Activated T-helper 1 cell treated with anti-CD3 and anti-CD28 coated beads, Interleukin-12 subunit alpha, Interleukin-12 subunit beta, Interleukin-2, Interleukin-4 antibody, amounts not matched to agents 30 ng/mL and 10 ng/mL and 1 ng/mL, durations not matched to agents 14 hours and 24 hours and 36 hours (primary cell): ENCODE measurements at regions of chr5 and their contacts with region 1.

Region 1: GRCh38 chr5:57173185-57174127 is at the start of gene GPBP1:
- DNase-seq: peak; percentile 97
- H3K4me3 Mint-ChIP-seq: peak within 1 kb of the TSS; percentile 96
- H3K27ac Mint-ChIP-seq: peak within 1 kb of the TSS; percentile 97
- H3K4me1 Mint-ChIP-seq: peaks cover 47% of the 10 kb centered on the region
- H3K27me3 Mint-ChIP-seq: no peaks in the 10 kb centered on the region
- total RNA-seq, gene GPBP1: 94.6 and 106 TPM in 2 replicates

Region 2: DNA sequence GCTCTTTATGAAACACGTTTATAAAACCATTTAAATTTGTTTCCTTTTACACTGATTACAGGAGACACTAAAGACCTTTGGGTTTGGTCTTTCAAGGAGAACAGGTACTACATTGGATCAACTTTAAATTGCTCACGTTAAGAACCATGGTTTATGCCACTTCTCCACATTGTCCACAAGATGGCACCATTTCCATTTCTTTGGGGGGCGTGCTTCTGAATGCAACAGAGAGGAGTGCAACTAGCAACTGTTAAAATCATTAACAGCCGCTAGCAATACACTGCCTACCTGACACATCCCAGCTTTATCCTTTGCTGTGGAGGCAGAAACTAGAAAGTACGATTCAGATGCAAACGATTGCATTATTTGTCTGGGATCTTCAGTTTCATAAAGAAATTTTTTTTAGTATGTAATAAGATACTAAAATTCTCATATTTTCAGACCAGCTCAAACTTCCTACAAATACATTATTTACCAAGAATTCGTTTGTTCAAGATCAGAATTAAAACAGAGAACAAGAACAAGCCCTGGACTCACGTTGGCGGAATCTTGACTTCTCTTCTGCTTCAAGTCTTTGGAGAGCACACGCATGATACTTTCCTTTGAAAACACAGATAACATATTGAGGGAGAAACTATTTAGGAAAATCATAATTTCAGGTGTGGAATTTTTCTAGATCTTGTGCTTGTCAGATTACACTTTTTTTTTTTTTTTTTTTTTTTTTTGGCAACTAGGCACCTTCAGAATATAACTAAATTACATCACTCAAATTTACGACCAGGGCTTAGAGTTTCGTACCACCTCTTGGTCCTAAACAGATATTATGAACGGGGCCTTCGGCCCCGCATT is 2001.2 kb before region 1 on chr5:
- intact Hi-C with region 1: loop called (anchors 2 kb)
- DNase-seq: peak; percentile 61
- H3K4me3 Mint-ChIP-seq: peak overlapping the region; percentile 86
- H3K27ac Mint-ChIP-seq: no peak overlapping the region
- H3K4me1 Mint-ChIP-seq: peaks cover 46% of the 10 kb centered on the region
- H3K27me3 Mint-ChIP-seq: peaks cover 78% of the 10 kb centered on the region

Region 3: DNA sequence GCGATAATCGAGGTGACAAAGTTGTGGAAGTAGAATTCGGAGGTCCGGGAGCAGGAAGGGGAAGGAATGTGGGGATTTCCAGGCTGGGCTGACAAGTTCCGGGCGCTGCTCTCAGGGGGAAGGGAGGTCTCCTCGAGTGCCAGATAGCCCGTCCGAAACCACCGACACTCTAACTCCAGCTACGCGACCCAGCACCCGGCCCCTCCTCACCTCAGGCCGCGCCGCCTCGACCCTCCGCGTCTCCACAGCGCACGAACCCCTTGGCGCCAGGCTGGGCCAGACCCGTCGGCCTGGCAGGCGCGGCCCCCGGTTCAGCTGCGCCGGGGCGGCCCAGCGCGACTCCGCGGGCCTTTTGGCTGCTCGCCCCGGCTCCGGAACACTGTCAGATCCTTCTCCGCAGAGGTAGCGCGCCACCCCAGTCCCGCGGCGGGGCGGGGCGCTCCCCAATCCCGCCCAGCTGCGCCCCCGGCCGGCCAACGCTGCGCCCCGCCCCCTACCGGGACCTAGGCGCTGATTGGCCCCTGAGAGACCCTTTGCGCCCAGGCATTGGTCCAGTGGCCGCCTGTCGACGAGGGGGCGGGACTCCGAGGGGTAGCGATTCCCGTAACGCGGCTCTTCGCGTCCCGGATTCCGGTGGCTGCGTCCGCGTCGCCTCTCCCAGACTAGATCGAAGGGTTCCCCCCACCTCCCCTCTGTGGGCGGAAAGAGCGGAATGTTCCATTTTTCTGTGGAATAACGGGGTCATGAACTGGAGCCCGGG is 1178.7 kb before region 1 on chr5 and contains the start of gene IL6ST:
- intact Hi-C with region 1: loop called (anchors 1 kb)
- DNase-seq: peak; percentile 95
- H3K4me3 Mint-ChIP-seq: peak within 1 kb of the TSS; percentile 95
- H3K27ac Mint-ChIP-seq: peak within 1 kb of the TSS; percentile 95
- H3K4me1 Mint-ChIP-seq: peaks cover 66% of the 10 kb centered on the region
- H3K27me3 Mint-ChIP-seq: no peaks in the 10 kb centered on the region
- total RNA-seq, gene IL6ST: 85.8 and 86.1 TPM in 2 replicates

Region 4: GRCh38 chr5:56696900-56697299 is 476.6 kb before region 1 on chr5:
- intact Hi-C with region 1: loop called (anchors 10 kb)
- DNase-seq: no peak
- H3K4me3 Mint-ChIP-seq: no peak overlapping the region
- H3K27ac Mint-ChIP-seq: no peak overlapping the region
- H3K4me1 Mint-ChIP-seq: peaks cover 79% of the 10 kb centered on the region
- H3K27me3 Mint-ChIP-seq: peaks cover 3% of the 10 kb centered on the region

Region 5: GRCh38 chr5:56909294-56910209 is 263.9 kb before region 1 on chr5 and contains the start of gene SETD9:
- intact Hi-C with region 1: loop called (anchors 1 kb)
- DNase-seq: peak; percentile 90
- H3K4me3 Mint-ChIP-seq: peak within 1 kb of the TSS; percentile 90
- H3K27ac Mint-ChIP-seq: peak within 1 kb of the TSS; percentile 95
- H3K4me1 Mint-ChIP-seq: peaks cover 25% of the 10 kb centered on the region
- H3K27me3 Mint-ChIP-seq: peaks cover 19% of the 10 kb centered on the region
- total RNA-seq, gene SETD9: 13.6 and 14.9 TPM in 2 replicates

Region 6: GRCh38 chr5:57085306-57086081 is 88.0 kb before region 1 on chr5:
- intact Hi-C with region 1: no loop called
- DNase-seq: no peak
- H3K4me3 Mint-ChIP-seq: no peak overlapping the region
- H3K27ac Mint-ChIP-seq: no peak overlapping the region
- H3K4me1 Mint-ChIP-seq: no peaks in the 10 kb centered on the region
- H3K27me3 Mint-ChIP-seq: peaks cover 18% of the 10 kb centered on the region

Region 7: DNA sequence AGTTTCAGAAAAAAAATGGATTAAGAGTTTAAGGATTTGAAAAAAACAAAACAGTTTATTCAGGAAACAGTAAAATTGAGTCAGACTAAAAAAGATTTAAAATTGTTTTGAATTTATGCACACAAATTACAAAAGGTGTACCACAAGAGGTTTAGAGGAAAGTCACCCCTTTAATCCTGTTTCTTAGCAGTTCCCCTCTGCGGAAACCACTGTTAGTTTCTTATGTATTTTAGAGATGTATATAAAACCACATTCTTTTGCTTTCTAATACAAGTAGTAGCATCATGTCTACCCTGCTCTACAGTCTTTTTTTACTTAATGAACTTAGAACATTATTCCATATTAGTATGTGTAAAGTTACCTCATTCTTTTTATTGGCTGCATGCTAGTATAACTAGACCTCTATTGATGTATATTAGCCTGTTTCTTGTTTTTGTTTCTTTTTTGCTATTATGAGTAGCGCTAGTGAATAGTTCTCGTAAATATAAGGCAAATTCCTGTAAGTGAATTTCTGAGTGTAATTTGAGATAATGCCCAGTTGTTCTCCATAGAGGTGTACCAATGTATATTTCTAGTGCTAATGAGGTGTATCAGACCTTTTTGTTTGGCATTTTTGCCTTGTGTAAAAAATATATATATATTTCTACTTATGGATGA is 20.4 kb after region 1 on chr5:
- intact Hi-C with region 1: loop called (anchors 1 kb)
- DNase-seq: no peak
- H3K4me3 Mint-ChIP-seq: peak overlapping the region; percentile 61
- H3K27ac Mint-ChIP-seq: peak overlapping the region; percentile 74
- H3K4me1 Mint-ChIP-seq: peaks cover 51% of the 10 kb centered on the region
- H3K27me3 Mint-ChIP-seq: no peaks in the 10 kb centered on the region

Region 8: GRCh38 chr5:57368010-57368409 is 194.6 kb after region 1 on chr5:
- intact Hi-C with region 1: no loop called
- DNase-seq: no peak
- H3K4me3 Mint-ChIP-seq: no peak overlapping the region
- H3K27ac Mint-ChIP-seq: no peak overlapping the region
- H3K4me1 Mint-ChIP-seq: no peaks in the 10 kb centered on the region
- H3K27me3 Mint-ChIP-seq: peaks cover 2% of the 10 kb centered on the region

Region 9: DNA sequence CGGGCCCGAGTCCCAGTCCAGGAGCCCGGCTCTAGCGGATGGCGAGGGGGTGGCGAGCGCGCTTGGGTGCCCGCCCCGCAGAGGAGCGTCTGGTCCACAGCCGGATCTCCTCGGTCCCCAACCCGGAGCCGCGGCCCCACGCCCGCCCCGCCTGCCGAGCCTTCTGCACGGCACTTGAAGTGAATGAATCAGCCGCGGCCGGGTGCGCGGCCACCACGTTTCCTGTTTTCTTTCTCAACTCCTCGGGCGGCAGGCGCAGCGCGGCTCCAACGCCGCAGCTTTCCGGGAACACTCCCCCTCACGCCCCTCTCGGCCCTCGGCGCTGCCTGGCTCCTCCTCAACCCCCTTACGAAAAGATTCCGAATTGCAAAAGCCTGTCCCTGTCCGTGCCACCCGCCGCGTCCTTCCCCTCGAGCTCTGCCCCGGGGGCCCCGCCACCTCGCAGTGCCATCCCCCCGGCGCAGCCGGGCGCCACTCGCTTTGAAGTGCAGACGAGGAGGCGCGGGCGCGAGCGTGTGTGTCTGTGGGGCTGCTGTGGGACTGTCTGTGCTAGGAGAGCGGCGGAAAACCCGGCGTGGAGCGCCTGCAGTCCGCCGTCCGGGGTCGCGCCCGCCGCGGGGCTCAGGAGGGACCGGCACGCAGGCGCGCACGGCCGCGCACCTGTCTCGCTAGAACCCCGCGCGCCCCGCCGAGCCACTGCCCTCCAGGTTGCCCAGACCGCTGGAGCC is 1866.0 kb after region 1 on chr5:
- intact Hi-C with region 1: loop called (anchors 2 kb)
- DNase-seq: peak; percentile 88
- H3K4me3 Mint-ChIP-seq: peak overlapping the region; percentile 89
- H3K27ac Mint-ChIP-seq: peak overlapping the region; percentile 99
- H3K4me1 Mint-ChIP-seq: peaks cover 56% of the 10 kb centered on the region
- H3K27me3 Mint-ChIP-seq: no peaks in the 10 kb centered on the region